Vagina (tissue), 2 donors: ENCODE measurements at regions of chr6 and their contacts with region 1.

Region 1: DNA sequence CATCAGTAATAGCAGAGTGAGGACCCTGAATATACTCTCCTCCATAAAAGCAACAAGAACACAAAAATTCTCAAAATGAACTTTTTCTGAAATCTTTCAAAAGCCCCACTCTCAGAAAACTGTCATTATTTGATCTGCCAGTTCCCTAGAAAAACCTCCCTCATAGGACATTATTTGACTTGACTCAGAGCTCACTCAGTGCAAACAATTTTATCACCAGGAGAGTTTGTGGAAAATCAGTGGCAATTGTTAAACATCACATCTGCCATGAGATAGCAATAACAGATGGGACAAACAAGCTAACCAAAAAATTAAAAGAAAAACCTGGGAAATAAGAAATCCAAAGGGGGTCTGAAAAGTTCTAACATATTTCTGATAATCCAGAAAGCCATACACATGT is 100.0 kb downstream of the ATG5 start:
- DNase-seq: no peak
- H3K4me3 ChIP-seq: no peak overlapping the region
- H3K27ac ChIP-seq: no peak overlapping the region
- H3K4me1 ChIP-seq: peaks cover 5% of the 10 kb centered on the region
- H3K27me3 ChIP-seq: no peaks in the 10 kb centered on the region
- CTCF ChIP-seq: no peak
- POLR2A ChIP-seq: no peak

Region 2: GRCh38 chr6:105484238-105485161 is 741.1 kb before region 1 on chr6:
- intact Hi-C with region 1: loop called (anchors 5 kb)
- DNase-seq: no peak
- H3K4me3 ChIP-seq: no peak overlapping the region
- H3K27ac ChIP-seq: peak overlapping the region; percentile 45
- H3K4me1 ChIP-seq: peaks cover 42% of the 10 kb centered on the region
- H3K27me3 ChIP-seq: no peaks in the 10 kb centered on the region
- CTCF ChIP-seq: peak; percentile 39 to 79 (median 63)
- POLR2A ChIP-seq: no peak